Testis (tissue), 5 donors: ENCODE measurements at regions of chr18 and their contacts with region 1.

Region 1: DNA sequence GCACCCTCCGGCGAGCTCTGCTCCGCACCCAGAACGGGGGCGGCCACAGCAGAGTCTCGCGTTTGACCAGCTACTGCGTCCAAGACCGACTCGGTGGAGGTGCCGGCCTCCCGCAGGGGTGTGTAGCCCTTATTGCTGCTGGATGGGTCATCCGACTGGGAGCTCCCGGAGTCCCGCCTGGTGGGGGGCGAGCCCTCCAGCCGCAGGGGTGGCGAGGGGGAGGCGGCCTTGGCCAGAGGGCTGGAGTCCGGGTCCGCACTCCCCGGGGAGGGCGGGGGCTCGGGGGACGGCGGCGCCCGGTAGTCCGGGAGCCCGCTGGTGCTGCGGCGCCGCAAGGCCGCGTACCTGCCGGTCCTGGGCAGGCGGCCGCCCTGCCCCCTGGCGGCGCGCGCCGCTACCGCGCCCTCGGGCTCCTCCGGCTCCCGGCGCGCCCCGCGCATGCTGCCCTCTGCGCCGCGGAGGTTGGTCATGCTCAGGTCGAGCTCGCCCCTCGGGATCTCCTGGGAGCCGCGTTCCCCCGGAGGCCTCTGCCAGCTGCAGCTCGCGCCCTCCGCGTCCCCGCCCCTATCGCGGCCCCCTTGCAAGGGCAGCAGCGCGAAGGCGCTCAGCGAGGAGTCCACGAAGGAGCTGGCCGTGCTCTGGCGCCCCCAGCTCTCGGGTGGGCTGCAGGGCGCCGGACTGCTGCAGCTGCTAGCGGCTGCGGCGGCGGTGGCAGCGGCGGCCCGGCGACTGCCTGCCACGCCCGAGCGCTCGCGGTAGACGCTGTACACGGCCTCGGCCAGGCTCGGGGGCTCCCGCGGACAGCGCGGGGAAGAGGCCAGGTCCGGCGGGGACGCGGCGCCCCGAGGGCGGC is 4.8 kb downstream of the TMEM200C start:
- DNase-seq: peak; percentile 75
- H3K4me3 ChIP-seq: peak overlapping the region; percentile 57 to 64
- H3K27ac ChIP-seq: no peak overlapping the region
- H3K4me1 ChIP-seq: no peaks in the 10 kb centered on the region
- H3K27me3 ChIP-seq: no peaks in the 10 kb centered on the region
- CTCF ChIP-seq: peak; percentile 60 to 69 (median 66)
- POLR2A ChIP-seq: no peak

Region 2: DNA sequence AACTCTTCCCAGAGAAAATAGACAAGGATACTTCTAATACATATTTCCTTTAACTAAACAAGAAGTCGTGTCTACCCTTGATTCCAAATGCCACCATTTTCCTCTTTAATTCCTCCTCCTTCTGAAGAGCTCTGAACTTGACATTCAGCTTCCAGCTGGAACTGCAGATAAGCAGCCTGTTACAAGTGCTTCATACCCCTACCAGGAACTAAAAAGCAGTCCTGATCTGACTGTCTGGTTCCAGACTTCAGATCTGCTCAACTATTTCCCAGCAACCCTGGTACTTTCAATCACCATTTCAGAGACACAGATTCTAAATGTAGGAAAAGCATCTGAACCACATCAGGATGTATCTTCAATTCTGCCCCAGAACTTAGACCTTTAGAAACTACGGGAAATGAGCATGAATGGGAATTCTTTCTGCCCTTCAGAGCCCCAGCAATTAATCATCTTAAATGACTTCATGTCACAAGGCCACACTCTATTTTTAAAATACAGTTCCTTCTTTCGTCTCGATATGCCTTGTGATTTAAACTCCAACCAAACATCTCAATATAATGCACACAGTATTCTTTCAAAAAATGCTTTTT is 364.7 kb after region 1 on chr18:
- intact Hi-C with region 1: no loop called
- DNase-seq: no peak
- H3K4me3 ChIP-seq: no peak overlapping the region
- H3K27ac ChIP-seq: peak overlapping the region; percentile 43 to 46
- H3K4me1 ChIP-seq: peaks cover 46% of the 10 kb centered on the region
- H3K27me3 ChIP-seq: no peaks in the 10 kb centered on the region
- CTCF ChIP-seq: no peak
- POLR2A ChIP-seq: no peak

Region 3: DNA sequence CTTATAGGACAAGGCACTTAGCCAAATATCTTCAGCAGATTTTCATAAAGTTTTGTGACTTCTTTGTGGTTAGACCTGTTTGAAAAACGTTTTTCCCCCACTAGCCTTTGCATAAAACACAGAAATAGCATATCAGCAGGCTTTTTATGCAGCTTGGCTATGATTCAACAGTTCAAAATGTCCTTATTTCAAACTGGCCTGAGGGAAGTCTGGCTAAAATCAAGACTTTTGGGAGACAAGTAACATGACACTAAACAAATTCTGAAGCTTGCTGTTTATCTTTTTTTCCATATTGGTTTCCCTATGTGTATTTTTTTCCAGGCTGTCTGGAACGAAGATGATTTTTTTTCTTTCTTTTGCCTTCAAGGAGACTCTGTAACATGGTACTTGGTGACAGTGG is 619.3 kb after region 1 on chr18:
- intact Hi-C with region 1: loop called (anchors 10 kb)
- DNase-seq: no peak
- H3K4me3 ChIP-seq: no peak overlapping the region
- H3K27ac ChIP-seq: no peak overlapping the region
- H3K4me1 ChIP-seq: no peaks in the 10 kb centered on the region
- H3K27me3 ChIP-seq: no peaks in the 10 kb centered on the region
- CTCF ChIP-seq: no peak
- POLR2A ChIP-seq: no peak